ENCODE measurements at regions of chr5 and their contacts with region 1.

Region 1: DNA sequence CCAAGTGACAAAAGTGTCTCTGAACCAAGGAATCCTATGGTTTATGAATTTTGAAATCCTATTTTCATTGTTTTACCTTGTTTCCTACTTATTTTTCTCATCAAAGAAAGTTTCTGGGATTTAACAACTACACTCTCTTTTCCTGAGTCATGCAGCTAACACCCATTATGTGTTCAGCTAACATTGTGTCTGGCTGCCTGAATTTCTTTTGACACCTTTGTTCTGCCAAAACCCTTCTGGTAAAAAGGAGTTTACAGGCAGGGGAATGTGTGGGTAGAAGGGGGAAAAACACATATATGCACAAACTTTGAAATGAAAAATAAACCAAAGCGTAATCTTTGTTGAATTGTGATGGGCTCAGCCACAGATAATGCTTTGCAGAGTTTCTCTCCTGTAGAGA is 146.2 kb downstream of the COX7C start:
- DNase-seq: no peak
- H3K4me3 ChIP-seq: no peak overlapping the region
- H3K27ac ChIP-seq: no peak overlapping the region
- H3K4me1 ChIP-seq: no peaks in the 10 kb centered on the region
- H3K27me3 ChIP-seq: no peaks in the 10 kb centered on the region
- CTCF ChIP-seq: no peak
- EP300 ChIP-seq: no peak
- POLR2A ChIP-seq: no peak

Region 2: DNA sequence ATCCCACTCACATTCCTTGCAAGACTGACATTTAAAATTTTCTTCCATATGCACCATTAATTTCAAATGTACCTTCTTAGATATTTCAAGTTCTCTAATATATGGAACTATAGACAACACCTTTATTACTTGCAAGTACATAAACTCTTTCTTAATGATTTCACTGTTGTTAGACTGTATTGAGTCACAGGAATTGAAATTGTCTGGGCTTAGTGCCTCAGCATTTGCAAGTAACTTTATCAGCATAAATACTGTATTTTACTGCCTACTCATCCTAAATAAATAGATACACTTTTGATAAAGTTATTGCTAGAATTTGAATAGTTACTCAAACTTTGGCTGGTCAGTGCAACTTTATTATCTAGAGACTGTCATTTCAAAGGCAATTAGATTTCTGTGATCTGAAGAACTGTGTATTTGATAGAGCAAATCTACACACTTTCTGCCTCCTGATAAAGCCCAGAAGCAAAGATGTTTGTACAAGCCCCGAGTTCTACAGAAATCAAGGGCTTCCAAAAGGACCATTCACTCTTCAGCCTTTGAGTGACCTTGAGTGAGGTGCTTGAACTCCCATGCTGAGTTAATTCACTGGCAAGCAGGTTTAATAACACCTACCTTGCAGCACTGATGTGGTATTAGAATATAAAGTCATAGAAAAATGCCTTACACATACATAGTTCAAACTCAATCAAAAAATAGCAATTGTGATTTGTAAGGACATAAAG is 54.6 kb before region 1 on chr5:
- intact Hi-C with region 1: loop called (anchors 5 kb)
- DNase-seq: peak in 1 of 2 donors; percentile 2
- H3K4me3 ChIP-seq: no peak overlapping the region
- H3K27ac ChIP-seq: no peak overlapping the region
- H3K4me1 ChIP-seq: no peaks in the 10 kb centered on the region
- H3K27me3 ChIP-seq: no peaks in the 10 kb centered on the region
- CTCF ChIP-seq: no peak
- EP300 ChIP-seq: no peak
- POLR2A ChIP-seq: no peak